OCI-LY7 (cell line): ENCODE measurements at regions of chr9 and their contacts with region 1.

Region 1: DNA sequence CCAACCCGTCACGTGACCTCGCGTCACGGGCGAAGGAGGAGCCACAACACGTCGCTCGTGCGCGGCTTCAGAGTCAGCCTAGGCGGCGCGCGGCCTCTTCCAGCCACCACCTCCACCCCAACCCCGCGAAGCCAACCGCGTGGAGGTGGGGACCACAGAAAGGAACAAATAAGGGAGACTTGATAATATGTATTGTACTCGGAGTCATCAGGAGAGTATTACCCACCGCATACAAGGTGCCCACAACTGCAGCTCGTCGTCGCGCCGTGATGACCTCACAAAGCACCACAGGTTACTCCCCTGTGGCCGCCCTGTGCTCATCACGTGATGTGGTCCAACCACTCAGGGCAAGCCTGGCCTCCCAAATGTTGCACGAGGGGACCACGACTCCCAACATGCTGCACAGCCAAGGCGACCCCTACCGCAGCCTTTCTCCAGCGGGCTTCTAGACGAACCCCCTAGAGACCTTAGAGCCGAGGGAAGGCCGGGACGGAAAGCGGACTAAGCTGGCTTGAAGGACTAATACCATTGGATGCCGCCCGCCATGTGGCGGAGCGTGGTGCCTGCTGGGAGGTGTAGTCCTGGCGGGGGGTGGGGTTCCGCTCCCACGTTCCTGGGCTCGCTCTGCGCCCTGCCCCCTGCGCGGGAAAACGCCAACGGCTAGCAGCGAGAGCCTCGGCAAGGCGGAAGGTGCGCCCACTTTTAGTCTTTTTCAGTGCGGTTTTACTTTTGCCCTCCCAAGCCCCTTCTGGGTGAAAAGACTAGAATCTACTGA is 423 bp upstream of the UBAP2 start:
- DNase-seq: peak; percentile 99
- H3K4me3 ChIP-seq: peak overlapping the region; percentile 99
- H3K27ac ChIP-seq: peak overlapping the region; percentile 72
- H3K4me1 ChIP-seq: peaks cover 34% of the 10 kb centered on the region
- CTCF ChIP-seq: no peak

Region 2: GRCh38 chr9:33921972-33922895 is 126.9 kb before region 1 on chr9:
- CTCF ChIA-PET with region 1: no interaction called
- POLR2A ChIA-PET with region 1: no interaction called
- intact Hi-C with region 1: no loop called
- DNase-seq: peak; percentile 52
- H3K4me3 ChIP-seq: no peak overlapping the region
- H3K27ac ChIP-seq: no peak overlapping the region
- H3K4me1 ChIP-seq: peaks cover 11% of the 10 kb centered on the region
- CTCF ChIP-seq: peak; percentile 86

Region 3: DNA sequence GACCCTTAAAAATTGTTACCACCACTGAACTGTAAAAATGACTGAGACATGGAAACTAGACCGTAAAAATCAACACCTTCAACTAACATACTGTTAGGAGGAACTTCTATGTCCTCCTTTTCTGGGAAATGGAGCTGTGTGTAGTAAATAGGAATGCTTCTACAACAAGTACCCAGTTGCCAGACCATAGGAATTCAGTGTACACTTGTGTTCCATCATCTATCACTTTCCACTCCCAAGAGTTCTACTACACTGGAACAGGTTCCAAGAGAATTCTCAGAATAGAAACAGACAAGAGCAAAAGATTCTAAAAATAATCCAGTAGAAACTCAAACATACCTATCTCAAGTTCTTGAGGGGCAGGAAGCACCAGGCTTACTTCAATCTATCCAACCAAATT is 24.0 kb before region 1 on chr9:
- CTCF ChIA-PET with region 1: no interaction called
- POLR2A ChIA-PET with region 1: no interaction called
- intact Hi-C with region 1: no loop called
- DNase-seq: no peak
- H3K4me3 ChIP-seq: no peak overlapping the region
- H3K27ac ChIP-seq: no peak overlapping the region
- H3K4me1 ChIP-seq: no peaks in the 10 kb centered on the region
- CTCF ChIP-seq: no peak

Region 4: GRCh38 chr9:34098307-34098706 is 49.2 kb after region 1 on chr9:
- CTCF ChIA-PET with region 1: interaction called, 4 read pairs
- POLR2A ChIA-PET with region 1: interaction called, 3 read pairs
- intact Hi-C with region 1: loop called (anchors 2 kb)
- DNase-seq: peak; percentile 88
- H3K4me3 ChIP-seq: peak overlapping the region; percentile 61
- H3K27ac ChIP-seq: peak overlapping the region; percentile 98
- H3K4me1 ChIP-seq: peaks cover 59% of the 10 kb centered on the region
- CTCF ChIP-seq: no peak

Region 5: DNA sequence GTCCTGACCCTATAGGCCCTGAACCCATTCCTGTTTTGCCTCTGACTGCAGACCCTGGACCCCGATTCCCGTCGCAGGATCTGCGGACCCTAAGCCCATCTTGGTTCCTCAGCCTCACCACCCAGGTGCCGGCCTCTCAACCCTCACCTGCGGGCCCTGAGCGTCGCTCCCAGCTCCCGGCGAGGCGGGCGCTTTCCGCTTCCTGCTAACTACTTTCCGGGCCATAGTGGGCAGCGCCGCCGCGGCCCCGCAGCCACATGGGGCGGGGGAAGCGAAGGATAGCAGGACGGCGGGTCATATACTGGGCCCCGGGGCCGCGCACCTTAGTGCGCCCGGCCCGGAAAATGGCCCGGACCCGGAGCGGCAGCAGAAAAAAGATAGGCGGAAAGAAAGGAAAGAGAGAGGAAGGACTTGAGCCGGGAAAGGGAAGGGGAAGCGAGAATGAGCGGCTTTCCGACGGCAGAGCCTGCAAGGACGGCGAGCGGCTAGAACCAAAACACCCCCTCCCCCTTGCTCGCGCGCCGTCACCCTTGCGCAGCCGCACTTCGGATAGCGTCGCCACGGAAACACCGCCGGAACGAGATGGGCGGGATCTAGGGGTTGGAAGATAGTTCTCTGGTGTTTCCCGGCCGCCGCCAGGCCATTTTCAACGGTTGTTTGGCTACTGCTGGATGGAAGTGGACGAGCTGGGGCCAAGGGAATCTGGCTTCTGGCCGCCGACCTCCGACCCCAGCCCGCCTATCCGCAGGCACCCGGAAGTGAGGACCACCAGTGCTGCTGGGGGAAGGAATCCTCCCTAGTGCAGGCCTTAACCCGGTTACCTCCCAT is 77.3 kb after region 1 on chr9 and contains the start of gene DCAF12:
- CTCF ChIA-PET with region 1: no interaction called
- POLR2A ChIA-PET with region 1: interaction called, 3 read pairs
- intact Hi-C with region 1: loop called (anchors 2 kb)
- DNase-seq: peak; percentile 91
- H3K4me3 ChIP-seq: peak within 1 kb of the TSS; percentile 85
- H3K27ac ChIP-seq: peak within 1 kb of the TSS; percentile 81
- H3K4me1 ChIP-seq: peaks cover 49% of the 10 kb centered on the region
- CTCF ChIP-seq: no peak
- total RNA-seq, gene DCAF12: 21.9 and 31.7 TPM in 2 replicates

Region 6: GRCh38 chr9:34178520-34179212 is 129.6 kb after region 1 on chr9 and contains the start of gene UBAP1:
- CTCF ChIA-PET with region 1: no interaction called
- POLR2A ChIA-PET with region 1: no interaction called
- intact Hi-C with region 1: loop called (anchors 2 kb)
- DNase-seq: peak; percentile 96
- H3K4me3 ChIP-seq: peak within 1 kb of the TSS; percentile 96
- H3K27ac ChIP-seq: peak within 1 kb of the TSS; percentile 44
- H3K4me1 ChIP-seq: peaks cover 19% of the 10 kb centered on the region
- CTCF ChIP-seq: no peak
- total RNA-seq, gene UBAP1: 12.4 and 13.1 TPM in 2 replicates

Region 7: DNA sequence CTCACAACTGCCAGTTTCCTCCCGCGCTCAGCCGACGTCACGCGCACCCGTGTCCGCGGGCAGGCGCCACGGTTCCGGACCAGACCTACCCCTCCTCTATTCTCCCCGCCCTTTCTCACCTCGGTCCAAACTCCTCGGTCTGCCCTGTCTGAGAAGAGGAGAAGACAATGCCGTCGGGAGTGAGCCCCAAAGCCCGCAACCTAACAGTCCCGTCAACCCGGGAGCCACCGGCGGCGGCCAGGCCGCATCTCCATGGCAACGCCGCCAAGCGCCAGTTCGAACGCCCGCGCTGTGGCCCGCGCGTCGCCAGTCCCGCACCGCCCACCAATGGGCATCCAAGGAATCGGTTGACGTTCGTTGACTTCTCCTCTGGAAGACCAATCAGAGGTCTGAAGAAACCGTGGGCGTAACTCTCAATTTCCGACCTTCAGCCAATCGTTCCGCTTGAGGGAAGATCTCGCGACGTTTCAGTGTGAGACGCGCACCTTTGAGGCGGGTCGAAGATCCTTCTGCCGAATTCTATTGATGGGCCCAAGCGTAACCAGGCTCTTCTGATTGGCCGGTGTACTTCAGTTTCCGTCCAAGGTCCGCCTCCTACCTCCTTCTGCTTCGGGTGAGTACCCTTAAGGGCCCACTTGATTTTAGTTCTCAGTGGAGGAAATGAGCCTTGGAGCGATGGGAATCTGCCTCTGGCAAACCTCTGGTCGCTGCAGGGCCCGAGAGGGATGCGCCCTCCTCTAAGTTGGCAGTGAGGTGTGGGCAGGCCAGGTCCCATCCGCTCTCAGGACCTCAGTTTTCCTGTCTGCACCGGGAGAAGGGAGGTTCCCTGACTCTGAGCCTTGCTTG is 280.1 kb after region 1 on chr9 and contains the starts of genes KIF24 and NUDT2:
- CTCF ChIA-PET with region 1: no interaction called
- POLR2A ChIA-PET with region 1: no interaction called
- intact Hi-C with region 1: loop called (anchors 1 kb)
- DNase-seq: peak; percentile 100
- H3K4me3 ChIP-seq: peak within 1 kb of the TSS; percentile 98
- H3K27ac ChIP-seq: peak within 1 kb of the TSS; percentile 74
- H3K4me1 ChIP-seq: peaks cover 46% of the 10 kb centered on the region
- CTCF ChIP-seq: no peak
- total RNA-seq, gene KIF24: 16.3 and 19.4 TPM in 2 replicates
- total RNA-seq, gene NUDT2: 23.8 and 27.7 TPM in 2 replicates